Motor neuron (in vitro differentiated cells): ENCODE measurements at regions of chr22 and their contacts with region 1.

Region 1: DNA sequence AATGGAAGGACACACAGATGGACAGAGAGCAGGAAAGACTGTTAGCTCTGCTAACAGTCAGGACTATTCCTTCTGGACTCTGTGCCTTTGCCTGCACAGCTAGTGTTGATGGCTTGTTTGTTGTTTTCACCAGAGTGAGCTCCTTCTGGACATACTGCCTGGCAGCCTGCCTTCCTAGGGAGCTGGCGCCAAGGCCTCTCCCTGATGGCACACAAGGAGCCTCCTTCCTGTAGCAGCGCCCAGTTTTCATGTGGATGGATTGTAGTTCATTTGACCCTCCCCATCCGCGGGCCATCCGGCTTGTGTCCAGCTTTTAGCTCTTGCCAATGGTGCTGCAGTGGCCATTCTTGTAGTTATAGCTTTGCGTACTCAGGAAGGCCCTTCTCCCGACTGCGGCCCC is 16.6 kb upstream of the BCR start:
- ATAC-seq: peak in 3 of 8 experiments; percentile 20 to 58 (median 28)
- H3K4me3 ChIP-seq: no peak overlapping the region
- H3K27ac ChIP-seq: peak overlapping the region in 1 of 2 donors; percentile 55
- H3K4me1 ChIP-seq: peaks cover 17 to 34% of the 10 kb centered on the region in 2 donors

Region 2: DNA sequence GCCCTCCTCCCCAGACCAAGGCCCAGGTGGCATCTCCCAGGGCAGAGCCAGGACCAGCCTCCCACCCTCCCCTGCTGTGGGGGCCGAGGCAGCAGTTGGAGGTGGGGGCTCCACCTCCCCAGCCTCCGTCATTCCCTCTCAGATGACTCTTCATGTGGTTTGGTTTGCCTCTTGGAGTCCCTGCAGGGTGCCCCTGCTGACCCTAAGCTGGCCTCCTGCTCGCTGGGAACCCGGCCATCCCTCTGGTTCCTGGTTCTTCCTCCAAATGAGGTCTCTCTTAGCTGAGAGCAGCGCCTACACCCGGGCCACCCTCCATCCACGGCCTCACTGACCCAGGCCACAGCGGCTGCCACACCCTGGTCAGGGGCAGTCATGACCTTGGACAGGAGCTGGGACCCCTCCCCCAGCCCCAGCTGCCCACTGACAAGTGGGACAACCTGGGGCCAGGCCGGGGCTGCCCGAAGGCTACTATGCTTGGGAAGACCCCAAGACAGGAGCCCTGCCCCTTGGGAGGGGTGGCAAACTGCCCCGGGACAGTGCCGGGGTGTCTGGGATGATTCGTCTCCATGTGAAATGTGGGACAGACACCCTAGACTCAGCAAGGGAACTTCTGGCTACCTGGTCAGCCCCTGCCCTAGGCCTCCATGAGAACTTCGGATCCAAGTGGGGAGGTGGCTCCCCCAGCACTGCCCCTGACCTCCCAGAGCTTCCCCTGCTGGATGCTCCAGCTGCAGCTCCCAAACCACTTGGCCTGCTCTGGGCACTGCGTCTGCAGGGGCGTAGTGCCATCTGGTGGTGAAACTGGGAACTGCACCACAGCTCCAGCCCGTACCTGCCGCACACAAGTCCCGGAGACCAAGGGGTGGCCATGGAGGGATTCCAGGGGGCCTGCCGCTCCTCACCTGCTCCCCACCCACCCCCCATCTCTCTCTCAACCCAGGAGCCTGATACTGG is 221.9 kb after region 1 on chr22:
- in situ Hi-C with region 1: loop called in 1 of 9 experiments (anchors 25 kb)
- ATAC-seq: peak; percentile 72 to 93 (median 80)
- H3K4me3 ChIP-seq: no peak overlapping the region
- H3K27ac ChIP-seq: no peak overlapping the region
- H3K4me1 ChIP-seq: peaks cover 14 to 25% of the 10 kb centered on the region in 2 donors